Activated T-helper 2 cell treated with anti-CD3 and anti-CD28 coated beads, Interferon-gamma antibody, Interleukin-2, Interleukin-4, amounts not matched to agents 10 μg/mL and 5 μg/mL and 100 μg/mL, durations not matched to agents 14 hours and 24 hours and 36 hours (primary cell): ENCODE measurements at regions of chr1 and their contacts with region 1.

Region 1: GRCh38 chr1:169106095-169106920 is at the start of gene ATP1B1:
- DNase-seq: peak; percentile 79
- H3K4me3 Mint-ChIP-seq: peak within 1 kb of the TSS; percentile 88
- H3K27ac Mint-ChIP-seq: peak within 1 kb of the TSS; percentile 78
- H3K4me1 Mint-ChIP-seq: peaks cover 42% of the 10 kb centered on the region
- H3K27me3 Mint-ChIP-seq: peaks cover 9% of the 10 kb centered on the region
- total RNA-seq, gene ATP1B1: 12.6 and 13.5 TPM in 2 replicates

Region 2: GRCh38 chr1:168365719-168366479 is 740.4 kb before region 1 on chr1:
- intact Hi-C with region 1: loop called (anchors 10 kb)
- DNase-seq: no peak
- H3K4me3 Mint-ChIP-seq: no peak overlapping the region
- H3K27ac Mint-ChIP-seq: no peak overlapping the region
- H3K4me1 Mint-ChIP-seq: peaks cover 46% of the 10 kb centered on the region
- H3K27me3 Mint-ChIP-seq: no peaks in the 10 kb centered on the region

Region 3: GRCh38 chr1:168824418-168824817 is 281.9 kb before region 1 on chr1:
- intact Hi-C with region 1: loop called (anchors 10 kb)
- DNase-seq: no peak
- H3K4me3 Mint-ChIP-seq: no peak overlapping the region
- H3K27ac Mint-ChIP-seq: no peak overlapping the region
- H3K4me1 Mint-ChIP-seq: peaks cover 14% of the 10 kb centered on the region
- H3K27me3 Mint-ChIP-seq: peaks cover 6% of the 10 kb centered on the region

Region 4: DNA sequence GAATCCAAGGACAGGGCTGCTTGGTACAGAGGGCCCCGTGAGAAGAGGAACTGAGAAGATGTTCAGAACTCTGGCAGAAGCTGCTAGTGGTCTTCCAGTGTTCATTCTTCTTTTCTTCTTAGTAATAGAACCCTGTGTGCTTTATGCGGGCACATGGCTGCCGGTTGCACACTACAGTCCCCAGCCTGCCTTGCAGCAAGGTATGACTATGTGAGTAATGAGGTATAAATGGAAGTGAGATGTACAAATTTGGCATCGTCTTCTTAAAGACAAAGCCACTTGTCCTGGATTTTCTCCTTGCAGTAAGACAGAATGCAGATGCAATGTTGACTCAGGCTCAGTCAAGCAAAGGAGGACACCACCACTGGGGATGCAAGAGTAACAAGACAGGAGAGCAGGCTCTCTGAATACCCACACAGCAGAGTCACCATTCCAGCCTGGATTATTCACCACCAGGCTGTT is 14.8 kb before region 1 on chr1:
- intact Hi-C with region 1: loop called (anchors 1 kb)
- DNase-seq: no peak
- H3K4me3 Mint-ChIP-seq: no peak overlapping the region
- H3K27ac Mint-ChIP-seq: no peak overlapping the region
- H3K4me1 Mint-ChIP-seq: peaks cover 8% of the 10 kb centered on the region
- H3K27me3 Mint-ChIP-seq: peaks cover 9% of the 10 kb centered on the region

Region 5: GRCh38 chr1:169240449-169241237 is 134.3 kb after region 1 on chr1:
- intact Hi-C with region 1: no loop called
- DNase-seq: no peak
- H3K4me3 Mint-ChIP-seq: no peak overlapping the region
- H3K27ac Mint-ChIP-seq: no peak overlapping the region
- H3K4me1 Mint-ChIP-seq: peaks cover 14% of the 10 kb centered on the region
- H3K27me3 Mint-ChIP-seq: no peaks in the 10 kb centered on the region

Region 6: GRCh38 chr1:169348383-169349036 is 242.2 kb after region 1 on chr1:
- intact Hi-C with region 1: loop called (anchors 5 kb)
- DNase-seq: no peak
- H3K4me3 Mint-ChIP-seq: no peak overlapping the region
- H3K27ac Mint-ChIP-seq: no peak overlapping the region
- H3K4me1 Mint-ChIP-seq: peaks cover 20% of the 10 kb centered on the region
- H3K27me3 Mint-ChIP-seq: no peaks in the 10 kb centered on the region